ENCODE measurements at regions of chr22 and their contacts with region 1.

Region 1: GRCh38 chr22:21641789-21642583 is at the start of gene SDF2L1:
- DNase-seq: peak; percentile 99
- ATAC-seq: peak; percentile 99
- H3K4me3 Mint-ChIP-seq: peak within 1 kb of the TSS; percentile 85
- H3K27ac Mint-ChIP-seq: peak within 1 kb of the TSS; percentile 80
- H3K4me1 Mint-ChIP-seq: peaks cover 30% of the 10 kb centered on the region
- H3K27me3 Mint-ChIP-seq: peaks cover 2% of the 10 kb centered on the region
- total RNA-seq, gene SDF2L1: 13.7 to 32.8 TPM

Region 2: GRCh38 chr22:21567456-21568346 is 74.3 kb before region 1 on chr22 and contains the start of gene UBE2L3:
- CTCF ChIA-PET with region 1: interaction called, 4 read pairs
- POLR2A ChIA-PET with region 1: interaction called, 3 read pairs
- intact Hi-C with region 1: loop called (anchors 1 kb)
- DNase-seq: peak; percentile 93
- ATAC-seq: peak; percentile 68
- H3K4me3 Mint-ChIP-seq: peak within 1 kb of the TSS; percentile 92
- H3K27ac Mint-ChIP-seq: peak within 1 kb of the TSS; percentile 96
- H3K4me1 Mint-ChIP-seq: peaks cover 38% of the 10 kb centered on the region
- H3K27me3 Mint-ChIP-seq: no peaks in the 10 kb centered on the region
- total RNA-seq, gene UBE2L3: 57.3 to 75.5 TPM

Region 3: DNA sequence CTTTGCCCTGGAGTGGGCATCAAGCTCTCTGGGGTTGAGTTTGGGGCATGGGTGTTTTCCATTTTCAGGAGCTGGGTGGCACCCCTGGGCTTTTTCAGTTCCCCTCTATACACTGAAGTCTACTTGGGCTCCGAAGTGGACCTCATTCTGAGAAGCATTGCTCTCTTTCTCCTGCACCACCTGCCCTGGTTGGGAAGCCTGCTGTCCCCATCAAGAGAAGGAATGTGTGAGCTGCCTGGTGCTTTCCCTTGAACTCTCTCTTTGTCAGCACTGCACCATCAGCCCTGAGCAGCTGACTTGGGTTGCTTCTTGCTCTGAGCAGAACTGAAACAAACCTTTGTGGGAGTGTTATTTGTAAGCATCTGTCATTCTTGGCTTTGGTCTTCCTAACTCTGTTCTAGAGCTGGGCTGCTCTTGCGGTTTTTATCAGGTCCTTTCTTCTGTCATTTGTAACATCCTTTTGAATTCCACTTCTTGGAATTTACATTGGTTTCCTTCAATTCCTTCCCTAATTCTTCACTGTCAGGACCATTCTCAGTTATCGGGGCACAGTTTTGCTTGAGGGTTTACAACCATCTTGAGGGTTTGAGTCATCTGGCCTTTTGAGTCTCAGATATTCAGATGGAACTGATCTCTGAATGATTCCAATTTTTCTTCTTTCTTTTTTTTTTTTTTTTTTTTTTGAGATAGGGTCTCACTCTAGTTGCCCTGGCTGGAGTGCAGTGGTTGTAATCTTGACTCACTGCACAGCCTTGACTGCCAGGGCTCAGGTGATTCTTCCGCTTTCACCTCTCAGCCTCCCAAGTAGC is 54.0 kb before region 1 on chr22:
- CTCF ChIA-PET with region 1: interaction called, 3 read pairs
- POLR2A ChIA-PET with region 1: no interaction called
- intact Hi-C with region 1: loop called in 1 of 2 experiments (anchors 5 kb)
- DNase-seq: peak; percentile 79
- ATAC-seq: peak; percentile 97
- H3K4me3 Mint-ChIP-seq: peak overlapping the region; percentile 12
- H3K27ac Mint-ChIP-seq: peak overlapping the region; percentile 88
- H3K4me1 Mint-ChIP-seq: peaks cover 69% of the 10 kb centered on the region
- H3K27me3 Mint-ChIP-seq: no peaks in the 10 kb centered on the region

Region 4: GRCh38 chr22:21615731-21616130 is 26.3 kb before region 1 on chr22:
- CTCF ChIA-PET with region 1: interaction called, 10 read pairs
- POLR2A ChIA-PET with region 1: no interaction called
- intact Hi-C with region 1: no loop called
- DNase-seq: no peak
- ATAC-seq: no peak
- H3K4me3 Mint-ChIP-seq: no peak overlapping the region
- H3K27ac Mint-ChIP-seq: no peak overlapping the region
- H3K4me1 Mint-ChIP-seq: peaks cover 8% of the 10 kb centered on the region
- H3K27me3 Mint-ChIP-seq: no peaks in the 10 kb centered on the region

Region 5: DNA sequence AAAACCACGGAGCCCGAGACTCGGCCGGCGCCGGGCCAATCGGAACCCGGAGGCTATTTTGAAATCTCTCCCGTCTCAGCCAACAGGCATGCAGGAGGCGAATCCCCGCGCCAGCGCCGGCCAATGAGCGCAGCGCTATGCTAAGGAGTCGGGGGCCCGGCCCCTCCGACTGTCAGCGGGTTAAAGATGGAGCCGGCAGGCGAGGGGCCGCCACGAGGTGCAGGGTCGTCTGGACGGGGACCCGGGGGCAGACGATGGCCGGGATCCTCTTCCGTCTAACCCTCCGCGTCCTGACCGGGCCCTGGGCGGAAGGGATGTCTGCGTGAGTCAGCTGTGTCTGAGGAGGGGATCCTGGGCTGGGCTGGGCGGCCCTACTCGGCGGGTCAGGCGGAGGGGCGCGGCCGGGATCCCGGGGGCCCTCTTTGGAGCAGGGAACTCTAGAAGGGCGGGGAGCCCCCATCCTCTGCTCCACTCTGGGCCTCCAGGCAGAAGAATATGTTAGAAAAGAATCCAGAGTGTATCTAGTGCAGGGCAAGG is 10.1 kb after region 1 on chr22:
- CTCF ChIA-PET with region 1: interaction called, 11 read pairs
- POLR2A ChIA-PET with region 1: interaction called, 5 read pairs
- intact Hi-C with region 1: loop called in 1 of 2 experiments (anchors 1 kb)
- DNase-seq: peak; percentile 95
- ATAC-seq: peak; percentile 97
- H3K4me3 Mint-ChIP-seq: peak overlapping the region; percentile 85
- H3K27ac Mint-ChIP-seq: peak overlapping the region; percentile 86
- H3K4me1 Mint-ChIP-seq: peaks cover 23% of the 10 kb centered on the region
- H3K27me3 Mint-ChIP-seq: no peaks in the 10 kb centered on the region

Region 6: GRCh38 chr22:21657361-21658032 is 15.5 kb after region 1 on chr22:
- CTCF ChIA-PET with region 1: interaction called, 11 read pairs
- POLR2A ChIA-PET with region 1: interaction called, 4 read pairs
- intact Hi-C with region 1: loop called in 1 of 2 experiments (anchors 1 kb)
- DNase-seq: peak; percentile 88
- ATAC-seq: peak; percentile 92
- H3K4me3 Mint-ChIP-seq: peak overlapping the region; percentile 76
- H3K27ac Mint-ChIP-seq: peak overlapping the region; percentile 31
- H3K4me1 Mint-ChIP-seq: peaks cover 13% of the 10 kb centered on the region
- H3K27me3 Mint-ChIP-seq: no peaks in the 10 kb centered on the region

Region 7: GRCh38 chr22:21666786-21667185 is 24.8 kb after region 1 on chr22:
- CTCF ChIA-PET with region 1: interaction called, 10 read pairs
- POLR2A ChIA-PET with region 1: no interaction called
- intact Hi-C with region 1: no loop called
- DNase-seq: no peak
- ATAC-seq: no peak
- H3K4me3 Mint-ChIP-seq: peak overlapping the region; percentile 93
- H3K27ac Mint-ChIP-seq: peak overlapping the region; percentile 96
- H3K4me1 Mint-ChIP-seq: peaks cover 27% of the 10 kb centered on the region
- H3K27me3 Mint-ChIP-seq: no peaks in the 10 kb centered on the region